Caco-2 (cell line): ENCODE measurements at regions of chr13 and their contacts with region 1.

Region 1: GRCh38 chr13:62119739-62120700 is 704.4 kb upstream of the PCDH20 start:
- DNase-seq: no peak
- H3K4me3 ChIP-seq: no peak overlapping the region
- H3K4me3 Mint-ChIP-seq: no peak overlapping the region
- H3K27ac Mint-ChIP-seq: no peak overlapping the region
- H3K4me1 ChIP-seq: no peaks in the 10 kb centered on the region
- H3K4me1 Mint-ChIP-seq: no peaks in the 10 kb centered on the region
- H3K27me3 ChIP-seq: no peaks in the 10 kb centered on the region
- H3K27me3 Mint-ChIP-seq: peaks cover 5% of the 10 kb centered on the region
- CTCF ChIP-seq: peak; percentile 29 to 56

Region 2: DNA sequence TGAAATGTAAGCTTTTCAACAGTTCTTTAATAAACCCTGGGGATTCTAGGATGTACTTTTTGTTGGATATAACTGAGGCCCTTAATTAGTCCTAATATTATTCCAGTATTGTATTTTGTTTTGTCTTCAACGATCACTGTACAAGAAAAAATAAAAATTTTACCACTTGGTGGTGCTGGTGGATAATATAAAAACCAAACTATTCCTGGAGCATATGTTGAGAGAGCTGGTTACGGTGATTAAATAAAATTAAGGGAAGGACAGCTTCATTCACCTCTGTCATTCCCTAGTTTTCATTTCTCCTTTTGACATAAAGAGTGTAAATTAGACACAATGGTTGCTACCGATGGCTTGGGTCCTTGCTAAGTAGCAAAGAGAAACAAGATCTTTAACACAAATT is 105.7 kb before region 1 on chr13:
- CTCF ChIA-PET with region 1: no interaction called
- POLR2A ChIA-PET with region 1: no interaction called
- intact Hi-C with region 1: loop called (anchors 2 kb)
- DNase-seq: peak in 1 of 2 experiments; percentile 24
- H3K4me3 ChIP-seq: no peak overlapping the region
- H3K4me3 Mint-ChIP-seq: no peak overlapping the region
- H3K27ac Mint-ChIP-seq: no peak overlapping the region
- H3K4me1 ChIP-seq: no peaks in the 10 kb centered on the region
- H3K4me1 Mint-ChIP-seq: no peaks in the 10 kb centered on the region
- H3K27me3 ChIP-seq: no peaks in the 10 kb centered on the region
- H3K27me3 Mint-ChIP-seq: no peaks in the 10 kb centered on the region
- CTCF ChIP-seq: peak; percentile 10 to 24

Region 3: DNA sequence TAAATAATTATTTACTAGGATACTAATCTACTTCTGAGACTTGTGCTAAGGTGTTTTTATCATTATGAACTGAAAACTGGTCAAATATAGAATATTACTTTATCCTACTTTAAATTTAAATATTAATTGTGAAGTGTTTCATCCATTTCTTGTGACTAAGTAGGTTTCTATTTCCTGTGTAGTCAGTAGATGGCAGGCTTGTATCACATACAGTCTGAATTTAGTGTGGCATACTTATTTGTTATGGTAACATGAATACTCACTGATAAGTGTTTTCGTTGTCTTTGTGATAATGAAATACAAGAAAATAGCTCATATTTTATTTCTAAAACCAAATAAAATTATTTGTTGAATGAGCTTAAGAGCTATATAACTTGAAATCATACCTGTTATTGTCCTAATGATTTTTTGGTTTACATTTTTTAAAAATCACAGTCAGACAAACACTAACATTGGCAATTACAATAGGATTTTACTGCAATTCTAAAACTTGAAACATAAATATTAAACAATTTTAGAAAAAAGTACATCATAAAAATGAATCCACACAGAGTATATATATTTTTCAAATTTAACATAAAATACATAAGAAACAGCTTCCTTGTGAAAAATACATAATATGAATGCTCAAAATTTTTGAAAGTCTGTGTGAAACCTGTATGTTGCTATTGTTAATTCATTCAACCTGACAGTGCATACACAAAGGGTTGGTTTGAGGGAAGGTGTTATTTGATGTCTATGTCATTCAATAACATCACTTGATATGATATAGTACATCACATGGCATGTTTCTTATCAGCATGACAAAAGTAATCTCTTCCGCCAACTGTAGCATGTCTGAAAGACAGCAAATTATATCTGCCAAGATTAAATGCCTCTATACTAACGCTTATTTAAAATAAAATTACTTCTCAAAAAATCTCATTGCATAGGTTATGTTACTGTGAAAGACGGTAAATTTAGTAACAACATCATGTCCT is 200.4 kb after region 1 on chr13:
- CTCF ChIA-PET with region 1: no interaction called
- POLR2A ChIA-PET with region 1: no interaction called
- intact Hi-C with region 1: loop called (anchors 1 kb)
- DNase-seq: peak in 1 of 2 experiments; percentile 42
- H3K4me3 ChIP-seq: no peak overlapping the region
- H3K4me3 Mint-ChIP-seq: no peak overlapping the region
- H3K27ac Mint-ChIP-seq: no peak overlapping the region
- H3K4me1 ChIP-seq: no peaks in the 10 kb centered on the region
- H3K4me1 Mint-ChIP-seq: no peaks in the 10 kb centered on the region
- H3K27me3 ChIP-seq: no peaks in the 10 kb centered on the region
- H3K27me3 Mint-ChIP-seq: no peaks in the 10 kb centered on the region
- CTCF ChIP-seq: peak; percentile 62 to 66

Region 4: DNA sequence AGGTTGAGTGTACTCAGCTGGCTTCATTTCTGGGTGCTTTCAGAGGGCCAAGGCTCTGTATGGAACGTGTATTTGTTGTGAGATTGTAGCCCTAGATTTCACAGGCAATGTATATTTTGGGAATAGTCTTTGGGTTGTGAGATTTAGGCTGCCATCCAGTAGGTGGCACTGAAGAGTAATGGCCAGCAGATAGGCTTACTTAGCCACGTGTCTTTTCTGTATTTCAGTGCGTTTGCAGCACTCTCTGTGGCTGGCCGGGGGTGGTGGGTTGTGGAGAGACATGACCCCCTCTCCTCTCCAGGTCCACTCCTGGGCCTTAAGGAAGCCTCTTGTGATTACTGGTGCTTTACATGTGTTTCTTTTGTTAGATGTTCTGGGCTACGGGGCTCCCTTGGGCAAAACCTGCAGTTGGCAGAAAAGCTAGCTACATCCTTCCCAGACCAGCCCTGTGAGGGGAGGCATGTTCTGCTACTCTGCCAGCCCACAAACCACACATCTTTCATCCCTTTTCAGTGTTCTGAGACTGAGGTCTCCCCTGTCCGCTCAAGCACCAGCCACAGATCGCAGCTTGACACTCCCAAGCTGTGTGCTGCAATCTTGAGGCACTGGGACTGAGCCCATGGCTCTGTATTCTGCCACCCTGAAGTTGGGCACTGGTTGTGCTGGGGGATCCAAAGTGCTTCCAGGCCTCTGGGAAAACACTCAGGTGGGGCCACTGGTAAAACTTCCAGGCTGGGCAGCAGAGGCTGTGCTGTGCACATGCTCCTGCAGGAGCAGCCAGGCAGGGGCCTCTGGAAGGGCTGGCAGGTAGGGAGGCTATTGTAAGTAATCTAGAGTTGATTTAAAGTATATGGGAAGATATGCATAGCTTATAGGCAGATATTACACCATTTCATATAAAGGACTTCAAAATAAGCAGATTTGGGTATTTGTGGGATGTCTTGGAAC is 392.4 kb after region 1 on chr13:
- CTCF ChIA-PET with region 1: no interaction called
- POLR2A ChIA-PET with region 1: no interaction called
- intact Hi-C with region 1: loop called (anchors 5 kb)
- DNase-seq: peak; percentile 42 to 57
- H3K4me3 ChIP-seq: no peak overlapping the region
- H3K4me3 Mint-ChIP-seq: no peak overlapping the region
- H3K27ac Mint-ChIP-seq: no peak overlapping the region
- H3K4me1 ChIP-seq: no peaks in the 10 kb centered on the region
- H3K4me1 Mint-ChIP-seq: peaks cover 10% of the 10 kb centered on the region
- H3K27me3 ChIP-seq: no peaks in the 10 kb centered on the region
- H3K27me3 Mint-ChIP-seq: peaks cover 4% of the 10 kb centered on the region
- CTCF ChIP-seq: peak; percentile 76 to 84